ENCODE measurements at regions of chr17 and their contacts with region 1.

Region 1: GRCh38 chr17:32253117-32253611 is 12.5 kb upstream of the RHBDL3 start:
- DNase-seq: peak; percentile 82
- CTCF ChIP-seq: peak; percentile 94

Region 2: DNA sequence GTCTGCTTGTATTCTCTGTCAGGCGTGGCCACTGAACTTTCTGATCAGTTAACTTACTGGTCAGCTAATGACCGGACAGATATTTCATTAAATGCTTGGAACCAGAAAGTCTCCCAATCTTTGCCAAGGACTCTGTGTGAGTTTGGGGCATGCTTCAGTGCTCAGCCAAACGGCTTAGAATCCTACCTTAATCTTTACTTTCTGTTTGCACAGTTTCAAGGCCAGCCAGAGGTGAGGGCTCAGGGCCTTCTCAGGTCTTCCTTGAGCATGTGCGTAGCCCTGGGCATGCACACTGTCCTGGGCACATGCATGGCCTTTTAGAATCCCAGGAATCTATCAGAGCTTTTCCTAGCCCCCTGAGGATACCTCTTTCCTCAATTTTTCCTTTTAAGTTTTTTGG is 631.6 kb before region 1 on chr17:
- in situ Hi-C with region 1: no loop called
- DNase-seq: no peak
- CTCF ChIP-seq: no peak

Region 3: GRCh38 chr17:31740611-31741082 is 512.5 kb before region 1 on chr17:
- in situ Hi-C with region 1: no loop called
- DNase-seq: no peak
- CTCF ChIP-seq: no peak

Region 4: DNA sequence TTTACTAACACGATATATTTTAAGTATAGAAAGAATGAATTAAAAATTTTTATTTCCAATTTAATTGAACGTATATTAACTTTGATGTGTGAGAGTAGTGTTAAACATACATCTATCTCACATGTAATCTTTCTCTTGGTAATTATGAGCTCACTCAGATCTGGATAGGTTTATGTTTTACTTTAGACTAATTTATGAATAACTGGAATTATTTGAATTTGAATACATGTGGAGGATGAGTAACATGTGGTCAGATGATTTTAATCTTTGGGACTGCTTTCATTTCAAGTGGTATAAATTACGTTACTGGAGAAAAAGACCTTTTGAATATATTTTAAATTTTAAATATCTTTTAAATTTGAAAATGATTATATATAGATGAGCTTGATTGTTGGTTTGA is 37.5 kb before region 1 on chr17:
- in situ Hi-C with region 1: no loop called
- DNase-seq: no peak
- CTCF ChIP-seq: no peak

Region 5: DNA sequence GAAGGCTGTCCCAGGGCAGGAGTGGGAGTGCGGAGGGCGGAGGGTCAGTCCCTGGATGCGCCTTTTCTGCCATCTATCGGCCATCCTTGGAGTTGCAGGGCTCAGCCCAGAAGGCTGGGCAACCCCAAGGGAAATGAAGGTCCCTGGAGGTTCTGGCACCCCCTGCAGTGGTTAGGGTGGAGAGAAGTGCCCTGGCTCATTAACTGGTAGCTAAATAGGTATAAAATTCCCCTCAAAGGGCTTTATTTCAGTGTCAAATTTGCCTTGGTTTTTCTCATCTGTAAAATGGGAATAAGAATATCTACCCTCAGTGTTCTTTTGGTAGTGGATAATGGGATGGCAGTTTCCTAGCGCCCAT is 66.4 kb after region 1 on chr17:
- in situ Hi-C with region 1: loop called (anchors 5 kb)
- DNase-seq: peak; percentile 86
- CTCF ChIP-seq: peak; percentile 97